ENCODE measurements at regions of chr9 and their contacts with region 1.

Region 1: DNA sequence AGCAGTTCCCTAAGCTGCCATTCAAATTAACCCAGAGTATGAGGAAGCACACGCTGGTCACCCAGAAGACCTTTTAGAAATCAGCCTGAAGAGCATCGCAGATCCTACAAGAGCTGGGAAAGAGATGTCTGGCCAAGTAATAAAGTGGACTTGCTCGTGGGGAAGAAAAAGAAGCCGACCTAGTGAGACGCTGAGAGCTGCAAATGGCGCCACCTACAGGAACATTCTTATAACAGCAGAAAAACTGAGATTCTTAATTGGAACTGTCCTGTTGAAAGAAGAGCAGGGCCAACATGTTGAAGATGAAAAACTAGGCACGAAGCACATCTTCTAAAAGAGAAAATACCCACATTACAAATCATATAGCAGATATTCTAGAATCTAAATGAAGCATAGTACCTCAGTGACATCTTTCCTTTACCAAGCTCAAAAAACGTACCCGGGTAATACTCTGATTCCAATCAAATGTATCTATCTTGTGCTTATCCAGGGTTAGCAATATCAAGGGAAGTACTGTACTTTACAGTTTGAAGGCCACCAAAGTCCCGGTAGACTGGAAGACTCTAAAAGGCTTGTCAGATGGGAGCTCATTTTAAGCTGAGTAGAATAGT is 3.9 kb upstream of the GNAQ start:
- DNase-seq: peak in 8 of 9 experiments; percentile 6 to 83 (median 54)
- ATAC-seq: peak; percentile 12
- H3K4me3 ChIP-seq: no peak overlapping the region
- H3K4me3 Mint-ChIP-seq: no peak overlapping the region
- H3K27ac ChIP-seq: no peak overlapping the region
- H3K27ac Mint-ChIP-seq: no peak overlapping the region
- H3K4me1 ChIP-seq: peaks cover 23% of the 10 kb centered on the region
- H3K4me1 Mint-ChIP-seq: peaks cover 31% of the 10 kb centered on the region
- H3K27me3 ChIP-seq: no peaks in the 10 kb centered on the region
- H3K27me3 Mint-ChIP-seq: peaks cover 2% of the 10 kb centered on the region
- CTCF ChIP-seq: peak; percentile 88

Region 2: DNA sequence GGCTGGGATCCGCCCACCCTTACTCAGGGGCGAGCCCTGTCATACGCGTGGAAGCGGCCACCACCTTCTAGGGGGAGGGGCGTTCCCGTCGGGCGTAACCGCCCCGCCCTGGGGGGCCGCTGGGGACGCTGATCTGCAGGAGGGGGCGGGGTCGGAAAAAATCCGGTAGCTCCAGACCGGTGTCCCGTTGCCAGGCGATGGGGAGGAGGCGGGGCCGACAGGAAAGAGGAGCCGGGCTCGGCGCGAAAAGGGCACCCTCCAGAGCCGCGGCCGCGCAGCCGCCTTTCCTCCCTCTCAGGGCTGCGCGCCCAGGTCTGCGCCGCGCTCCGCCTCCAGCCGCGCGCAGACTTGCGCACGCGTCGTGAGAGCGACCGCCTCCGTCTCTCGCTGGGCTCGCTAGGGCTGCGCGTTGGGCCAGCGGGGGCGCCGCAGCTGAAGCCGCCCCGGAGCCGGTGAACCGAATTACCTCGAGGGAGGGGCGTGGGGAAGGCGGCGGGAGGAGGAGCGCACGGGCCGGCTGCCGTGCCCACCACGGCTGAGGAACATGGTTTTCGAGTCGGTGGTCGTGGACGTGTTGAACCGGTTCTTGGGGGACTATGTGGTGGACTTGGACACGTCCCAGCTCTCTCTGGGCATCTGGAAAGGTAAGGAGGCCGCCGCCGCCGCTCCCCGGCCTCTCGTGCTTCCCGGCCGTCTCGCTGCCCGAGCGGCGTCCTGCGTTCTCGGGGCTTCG is 858.2 kb before region 1 on chr9 and contains the start of gene VPS13A:
- CTCF ChIA-PET with region 1: no interaction called
- POLR2A ChIA-PET with region 1: no interaction called
- intact Hi-C with region 1: loop called (anchors 5 kb)
- DNase-seq: peak; percentile 74 to 96 (median 91)
- ATAC-seq: peak; percentile 81
- H3K4me3 ChIP-seq: peak within 1 kb of the TSS; percentile 74 to 92
- H3K4me3 Mint-ChIP-seq: peak within 1 kb of the TSS; percentile 92
- H3K27ac ChIP-seq: peak within 1 kb of the TSS; percentile 72 to 82
- H3K27ac Mint-ChIP-seq: peak within 1 kb of the TSS; percentile 93
- H3K4me1 ChIP-seq: peaks cover 11% of the 10 kb centered on the region
- H3K4me1 Mint-ChIP-seq: peaks cover 40% of the 10 kb centered on the region
- H3K27me3 ChIP-seq: no peaks in the 10 kb centered on the region
- H3K27me3 Mint-ChIP-seq: no peaks in the 10 kb centered on the region
- CTCF ChIP-seq: no peak
- total RNA-seq, gene VPS13A: 35.5 to 37.4 TPM

Region 3: DNA sequence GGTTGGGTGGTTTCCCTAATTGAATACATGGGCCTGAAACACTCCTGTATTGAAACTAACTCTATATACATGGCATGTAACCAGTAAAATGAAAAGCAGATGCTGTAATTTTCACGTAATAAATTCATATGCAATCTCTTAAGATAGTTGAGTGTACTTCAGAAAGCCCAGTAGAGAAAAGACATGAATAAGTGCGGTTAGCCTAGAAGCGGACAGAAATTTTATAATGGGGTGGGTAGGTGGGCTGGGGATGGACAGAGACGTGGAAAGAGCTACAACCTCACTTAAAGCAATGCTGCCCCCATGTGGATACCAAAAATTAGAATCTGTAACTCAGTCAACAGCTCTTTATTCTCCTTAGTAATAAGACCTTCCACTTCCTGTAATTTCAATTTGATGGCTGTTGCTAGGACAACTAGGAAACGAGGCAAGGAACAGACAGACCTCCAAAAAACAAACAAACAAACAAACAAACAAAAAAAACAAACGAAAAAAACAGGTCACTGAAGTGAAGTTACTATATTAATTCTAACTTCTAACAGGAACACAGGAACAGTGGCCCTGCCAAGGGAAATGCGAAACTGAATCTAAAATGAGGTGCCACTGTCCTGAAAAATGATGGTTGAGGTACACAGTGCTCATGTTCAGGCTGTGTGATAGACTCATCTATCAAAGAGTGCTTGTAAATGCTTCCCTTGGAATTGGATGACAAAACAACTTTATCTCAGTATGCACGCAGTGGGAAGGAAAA is 284.0 kb before region 1 on chr9:
- CTCF ChIA-PET with region 1: interaction called, 3 read pairs
- POLR2A ChIA-PET with region 1: no interaction called
- intact Hi-C with region 1: loop called in 1 of 2 experiments (anchors 10 kb)
- DNase-seq: peak in 2 of 9 experiments; percentile 17 to 33
- ATAC-seq: no peak
- H3K4me3 ChIP-seq: no peak overlapping the region
- H3K4me3 Mint-ChIP-seq: no peak overlapping the region
- H3K27ac ChIP-seq: no peak overlapping the region
- H3K27ac Mint-ChIP-seq: no peak overlapping the region
- H3K4me1 ChIP-seq: no peaks in the 10 kb centered on the region
- H3K4me1 Mint-ChIP-seq: peaks cover 20% of the 10 kb centered on the region
- H3K27me3 ChIP-seq: no peaks in the 10 kb centered on the region
- H3K27me3 Mint-ChIP-seq: no peaks in the 10 kb centered on the region
- CTCF ChIP-seq: no peak

Region 4: GRCh38 chr9:77977210-77977611 is 58.3 kb before region 1 on chr9:
- CTCF ChIA-PET with region 1: interaction called, 65 read pairs
- POLR2A ChIA-PET with region 1: interaction called, 8 read pairs
- intact Hi-C with region 1: loop called (anchors 1 kb)
- DNase-seq: peak in 8 of 9 experiments; percentile 19 to 73 (median 45)
- ATAC-seq: peak; percentile 53
- H3K4me3 ChIP-seq: no peak overlapping the region
- H3K4me3 Mint-ChIP-seq: peak overlapping the region; percentile 60
- H3K27ac ChIP-seq: peak overlapping the region in 1 of 2 experiments; percentile 68
- H3K27ac Mint-ChIP-seq: peak overlapping the region; percentile 78
- H3K4me1 ChIP-seq: peaks cover 48% of the 10 kb centered on the region
- H3K4me1 Mint-ChIP-seq: peaks cover 54% of the 10 kb centered on the region
- H3K27me3 ChIP-seq: no peaks in the 10 kb centered on the region
- H3K27me3 Mint-ChIP-seq: no peaks in the 10 kb centered on the region
- CTCF ChIP-seq: no peak

Region 5: GRCh38 chr9:78046112-78046511 is 10.6 kb after region 1 on chr9:
- CTCF ChIA-PET with region 1: interaction called, 42 read pairs
- POLR2A ChIA-PET with region 1: interaction called, 4 read pairs
- intact Hi-C with region 1: no loop called
- DNase-seq: no peak
- ATAC-seq: no peak
- H3K4me3 ChIP-seq: no peak overlapping the region
- H3K4me3 Mint-ChIP-seq: no peak overlapping the region
- H3K27ac ChIP-seq: no peak overlapping the region
- H3K27ac Mint-ChIP-seq: no peak overlapping the region
- H3K4me1 ChIP-seq: no peaks in the 10 kb centered on the region
- H3K4me1 Mint-ChIP-seq: no peaks in the 10 kb centered on the region
- H3K27me3 ChIP-seq: no peaks in the 10 kb centered on the region
- H3K27me3 Mint-ChIP-seq: peaks cover 7% of the 10 kb centered on the region
- CTCF ChIP-seq: no peak

Region 6: GRCh38 chr9:78121488-78121887 is 86.0 kb after region 1 on chr9:
- CTCF ChIA-PET with region 1: interaction called, 29 read pairs
- POLR2A ChIA-PET with region 1: interaction called, 4 read pairs
- intact Hi-C with region 1: loop called (anchors 2 to 5 kb)
- DNase-seq: peak; percentile 5 to 78 (median 57)
- ATAC-seq: no peak
- H3K4me3 ChIP-seq: no peak overlapping the region
- H3K4me3 Mint-ChIP-seq: no peak overlapping the region
- H3K27ac ChIP-seq: no peak overlapping the region
- H3K27ac Mint-ChIP-seq: no peak overlapping the region
- H3K4me1 ChIP-seq: peaks cover 25% of the 10 kb centered on the region
- H3K4me1 Mint-ChIP-seq: peaks cover 30% of the 10 kb centered on the region
- H3K27me3 ChIP-seq: no peaks in the 10 kb centered on the region
- H3K27me3 Mint-ChIP-seq: peaks cover under 1% of the 10 kb centered on the region
- CTCF ChIP-seq: peak; percentile 60

Region 7: DNA sequence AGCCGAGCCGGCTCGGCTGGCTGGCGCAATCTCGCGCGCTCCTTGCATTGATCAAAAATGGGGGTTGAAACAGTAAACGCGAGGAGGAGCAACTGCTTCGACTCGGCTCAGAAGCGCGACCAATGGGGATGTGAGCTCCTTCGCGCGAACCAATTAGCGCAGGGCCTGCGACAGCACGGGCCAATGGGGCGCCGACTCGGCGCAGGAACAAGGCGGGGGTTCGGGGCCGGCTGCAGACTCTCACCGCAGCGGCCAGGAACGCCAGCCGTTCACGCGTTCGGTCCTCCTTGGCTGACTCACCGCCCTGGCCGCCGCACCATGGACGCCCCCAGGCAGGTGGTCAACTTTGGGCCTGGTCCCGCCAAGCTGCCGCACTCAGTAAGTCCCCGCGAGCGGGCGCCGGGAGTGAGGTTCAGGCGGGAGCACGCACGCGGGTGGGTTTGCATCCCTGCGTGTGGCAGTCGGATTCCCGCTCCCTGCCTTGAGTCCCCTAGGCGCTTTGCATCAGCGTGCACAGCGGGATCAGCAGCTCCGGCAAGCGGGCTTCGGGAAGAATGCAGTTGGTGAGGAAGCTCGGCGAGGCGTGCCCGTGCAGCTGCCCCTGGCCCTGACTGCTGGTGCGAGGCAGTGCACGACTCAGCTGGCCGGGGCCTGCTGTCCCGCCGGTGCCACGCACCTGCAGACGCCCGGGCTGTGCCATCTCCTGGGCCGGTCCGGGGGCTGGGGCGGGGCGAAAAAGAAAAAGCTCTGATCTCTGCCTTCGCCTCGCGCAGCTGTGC is 261.6 kb after region 1 on chr9 and contains the start of gene PSAT1:
- CTCF ChIA-PET with region 1: no interaction called
- POLR2A ChIA-PET with region 1: no interaction called
- intact Hi-C with region 1: loop called in 1 of 2 experiments (anchors 5 kb)
- DNase-seq: peak; percentile 68 to 93 (median 85)
- ATAC-seq: peak; percentile 97
- H3K4me3 ChIP-seq: peak within 1 kb of the TSS; percentile 92 to 99
- H3K4me3 Mint-ChIP-seq: peak within 1 kb of the TSS; percentile 89
- H3K27ac ChIP-seq: peak within 1 kb of the TSS in 1 of 2 experiments; percentile 40
- H3K27ac Mint-ChIP-seq: peak within 1 kb of the TSS; percentile 72
- H3K4me1 ChIP-seq: peaks cover 21% of the 10 kb centered on the region
- H3K4me1 Mint-ChIP-seq: peaks cover 28% of the 10 kb centered on the region
- H3K27me3 ChIP-seq: no peaks in the 10 kb centered on the region
- H3K27me3 Mint-ChIP-seq: no peaks in the 10 kb centered on the region
- CTCF ChIP-seq: no peak
- total RNA-seq, gene PSAT1: 0.53 to 0.98 TPM

Region 8: GRCh38 chr9:78519741-78520140 is 484.3 kb after region 1 on chr9:
- CTCF ChIA-PET with region 1: no interaction called
- POLR2A ChIA-PET with region 1: no interaction called
- intact Hi-C with region 1: no loop called
- DNase-seq: no peak
- ATAC-seq: no peak
- H3K4me3 ChIP-seq: no peak overlapping the region
- H3K4me3 Mint-ChIP-seq: no peak overlapping the region
- H3K27ac ChIP-seq: no peak overlapping the region
- H3K27ac Mint-ChIP-seq: no peak overlapping the region
- H3K4me1 ChIP-seq: no peaks in the 10 kb centered on the region
- H3K4me1 Mint-ChIP-seq: no peaks in the 10 kb centered on the region
- H3K27me3 ChIP-seq: no peaks in the 10 kb centered on the region
- H3K27me3 Mint-ChIP-seq: peaks cover 5% of the 10 kb centered on the region
- CTCF ChIP-seq: no peak

Region 9: DNA sequence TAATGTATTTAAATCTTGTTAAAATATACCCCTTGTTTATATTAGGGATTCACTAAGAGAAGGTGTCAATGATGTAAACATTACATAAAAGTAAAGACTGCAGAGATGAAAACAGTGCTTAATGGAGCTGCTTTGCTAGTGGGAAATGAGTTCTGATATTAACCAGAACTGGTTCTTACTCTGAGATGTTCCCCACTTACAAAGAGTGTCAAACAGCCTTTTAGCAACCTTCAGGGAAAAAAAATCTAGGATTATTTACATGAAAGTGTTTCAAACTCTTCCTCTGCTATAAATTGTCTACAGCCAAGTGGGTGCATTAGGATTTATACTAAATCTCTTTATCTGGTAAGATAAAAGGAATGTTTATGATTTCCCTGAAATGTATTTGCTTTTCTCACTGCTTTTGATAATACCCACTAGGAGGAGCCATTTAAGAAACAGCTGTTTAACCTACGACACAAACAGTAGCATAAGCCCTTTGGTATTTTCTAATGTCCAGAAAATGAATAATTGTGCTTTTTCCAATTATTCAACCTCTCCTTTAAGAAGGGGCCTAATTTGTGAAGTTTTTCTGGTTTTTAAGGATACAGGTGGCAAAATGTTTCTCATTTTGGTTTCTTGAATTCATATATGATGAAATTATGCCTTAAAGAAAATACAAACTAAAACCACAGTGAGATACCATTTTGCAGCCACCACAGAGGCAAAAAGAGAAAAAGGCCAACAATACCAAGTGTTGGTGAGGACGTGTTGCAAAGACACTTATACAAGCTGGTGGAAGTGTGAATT is 1722.6 kb after region 1 on chr9:
- CTCF ChIA-PET with region 1: no interaction called
- POLR2A ChIA-PET with region 1: no interaction called
- intact Hi-C with region 1: no loop called
- DNase-seq: peak in 2 of 9 experiments; percentile 3 to 14
- ATAC-seq: no peak
- H3K4me3 ChIP-seq: no peak overlapping the region
- H3K4me3 Mint-ChIP-seq: no peak overlapping the region
- H3K27ac ChIP-seq: no peak overlapping the region
- H3K27ac Mint-ChIP-seq: no peak overlapping the region
- H3K4me1 ChIP-seq: no peaks in the 10 kb centered on the region
- H3K4me1 Mint-ChIP-seq: peaks cover 2% of the 10 kb centered on the region
- H3K27me3 ChIP-seq: no peaks in the 10 kb centered on the region
- H3K27me3 Mint-ChIP-seq: no peaks in the 10 kb centered on the region
- CTCF ChIP-seq: peak; percentile 41

Measured in CD8-positive, alpha-beta T cell (primary cell).